HAP-1 (cell line): ENCODE measurements at regions of chr15 and their contacts with region 1.

Region 1: DNA sequence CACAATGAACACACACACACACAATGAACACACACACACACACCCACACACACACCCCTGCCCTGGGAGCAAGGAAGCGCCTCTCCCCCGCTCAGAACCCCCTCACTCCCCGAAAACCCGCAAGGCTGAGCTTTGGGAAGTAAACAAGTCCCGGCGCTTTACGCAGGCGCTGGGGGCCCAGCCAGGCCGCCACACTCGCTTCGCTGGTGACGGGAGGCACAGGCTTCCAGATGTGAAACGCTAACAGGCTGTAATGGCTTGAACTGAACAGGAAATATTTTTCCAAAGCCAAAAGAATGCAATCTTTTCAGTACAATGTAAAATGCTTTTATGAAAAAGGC is 122.7 kb upstream of the IGF1R start:
- DNase-seq: no peak
- H3K4me3 ChIP-seq: no peak overlapping the region
- H3K4me1 ChIP-seq: no peaks in the 10 kb centered on the region
- H3K27me3 ChIP-seq: peaks cover 21% of the 10 kb centered on the region

Region 2: DNA sequence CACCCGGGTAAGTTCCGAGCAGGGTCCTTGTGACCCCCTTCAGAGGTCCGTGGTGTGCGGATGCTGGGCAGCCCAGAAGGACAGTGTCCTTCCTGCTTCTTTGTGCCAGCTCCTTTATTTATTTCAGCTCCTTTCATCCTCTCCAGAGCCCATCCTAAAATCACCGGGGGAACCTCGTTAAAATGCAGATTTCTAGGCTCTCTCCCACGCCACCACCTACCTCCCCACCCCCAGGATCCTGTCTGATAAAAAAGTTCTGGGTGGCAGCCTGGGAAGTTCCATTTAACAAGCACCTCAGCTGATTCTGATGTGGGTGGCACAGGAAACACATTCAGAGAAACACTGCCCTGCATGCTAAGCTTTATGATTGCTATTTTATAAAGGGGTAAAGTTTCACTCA is 110.2 kb after region 1 on chr15:
- in situ Hi-C with region 1: loop called (anchors 10 kb)
- DNase-seq: no peak
- H3K4me3 ChIP-seq: no peak overlapping the region
- H3K4me1 ChIP-seq: no peaks in the 10 kb centered on the region
- H3K27me3 ChIP-seq: no peaks in the 10 kb centered on the region